Lower leg skin (tissue), 4 donors: ENCODE measurements at regions of chr12 and their contacts with region 1.

Region 1: GRCh38 chr12:81231574-81232368 is 153.9 kb downstream of the ACSS3 start:
- DNase-seq: no peak
- H3K4me3 ChIP-seq: no peak overlapping the region
- CTCF ChIP-seq: no peak
- POLR2A ChIP-seq: no peak

Region 2: DNA sequence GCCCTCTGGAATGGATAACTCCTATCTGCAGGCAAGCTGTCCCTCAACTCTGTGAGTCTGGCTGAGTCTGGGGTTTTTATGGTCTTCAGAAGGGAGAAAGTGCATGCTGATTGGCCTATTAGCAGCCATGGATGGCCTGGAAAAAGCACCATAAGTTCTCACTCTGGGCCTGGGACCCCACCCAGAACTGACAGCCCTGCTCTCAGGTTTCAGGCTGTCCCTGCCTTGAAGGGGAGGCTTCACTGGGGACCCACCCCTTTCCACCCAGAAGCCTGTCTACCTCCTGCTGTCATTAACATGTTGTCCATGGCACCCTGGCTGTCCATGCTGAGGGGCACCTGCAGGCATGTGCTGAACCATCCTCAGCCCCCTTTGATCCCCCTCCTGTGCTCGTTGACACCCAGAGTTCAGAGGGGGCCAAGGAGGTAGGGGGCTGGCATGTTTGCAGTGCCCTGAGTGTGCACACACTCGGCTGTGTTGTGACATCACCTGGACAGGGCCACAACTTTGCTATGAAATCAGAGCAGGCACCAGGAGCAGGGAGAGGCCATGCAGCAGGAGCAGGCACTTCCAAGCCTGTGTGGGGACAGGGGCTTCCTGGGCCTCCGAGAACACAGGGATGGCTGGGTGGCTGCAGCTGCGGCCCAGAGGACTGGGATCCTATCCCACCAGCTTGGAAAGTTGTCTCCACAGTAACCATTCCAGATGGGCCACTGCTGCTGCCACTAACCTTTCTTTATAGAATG is 69.2 kb before region 1 on chr12:
- intact Hi-C with region 1: loop called (anchors 2 kb)
- DNase-seq: no peak
- H3K4me3 ChIP-seq: no peak overlapping the region
- CTCF ChIP-seq: no peak
- POLR2A ChIP-seq: no peak